Naive thymus-derived CD4-positive, alpha-beta T cell (primary cell): ENCODE measurements at regions of chr1 and their contacts with region 1.

Region 1: GRCh38 chr1:66271216-66271903 is 262.6 kb upstream of the SGIP1 start:
- DNase-seq: peak in 7 of 9 donors; percentile 43 to 72 (median 64)
- ATAC-seq: peak; percentile 64
- H3K4me3 ChIP-seq: no peak overlapping the region
- H3K4me3 Mint-ChIP-seq: peak overlapping the region in 9 of 10 donors; percentile 22 to 69 (median 33)
- H3K27ac ChIP-seq: peak overlapping the region; percentile 59
- H3K27ac Mint-ChIP-seq: peak overlapping the region; percentile 60 to 92 (median 87)
- H3K4me1 ChIP-seq: peaks cover 30 to 43% of the 10 kb centered on the region in 2 donors
- H3K4me1 Mint-ChIP-seq: peaks cover 36 to 69% (median 54%) of the 10 kb centered on the region in 7 donors
- H3K27me3 ChIP-seq: no peaks in the 10 kb centered on the region
- H3K27me3 Mint-ChIP-seq: no peaks in the 10 kb centered on the region

Region 2: DNA sequence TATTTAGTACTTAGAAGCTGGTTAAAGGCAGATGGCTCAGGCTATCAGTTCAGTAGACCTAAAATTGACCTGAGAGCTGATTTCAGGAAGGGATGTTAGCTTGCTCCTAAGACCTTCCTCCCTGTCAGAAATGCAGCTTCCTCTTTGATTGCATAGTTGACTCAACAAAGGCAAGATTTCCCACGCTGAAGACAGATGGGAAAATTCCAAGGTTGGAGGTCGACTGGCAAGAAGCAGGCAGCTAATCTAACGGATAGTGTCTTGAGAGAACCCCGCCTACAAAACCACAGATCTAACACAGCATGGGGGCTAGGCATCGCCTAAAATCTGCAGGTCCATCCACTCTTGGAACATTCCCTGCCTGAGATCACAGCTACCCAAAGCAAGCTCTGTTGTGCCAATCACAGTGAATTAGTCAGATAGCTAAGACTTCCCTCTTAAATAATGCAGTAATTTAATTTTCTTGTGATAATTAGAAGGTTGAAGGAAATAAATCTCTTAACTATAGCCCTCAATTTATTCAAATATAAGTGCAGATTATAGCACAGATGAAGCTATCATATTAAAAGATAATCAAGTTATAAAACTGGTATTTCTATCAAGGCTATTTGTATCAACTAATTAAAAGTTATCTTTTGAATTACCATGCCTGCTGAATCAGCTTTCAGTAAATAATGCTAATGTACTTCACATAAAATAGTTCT is 95.2 kb before region 1 on chr1:
- CTCF ChIA-PET with region 1: no interaction called
- POLR2A ChIA-PET with region 1: no interaction called
- intact Hi-C with region 1: no loop called
- DNase-seq: no peak
- ATAC-seq: no peak
- H3K4me3 ChIP-seq: no peak overlapping the region
- H3K4me3 Mint-ChIP-seq: no peak overlapping the region
- H3K27ac ChIP-seq: no peak overlapping the region
- H3K27ac Mint-ChIP-seq: no peak overlapping the region
- H3K4me1 ChIP-seq: no peaks in the 10 kb centered on the region
- H3K4me1 Mint-ChIP-seq: peaks cover 0 to 15% (median 0%) of the 10 kb centered on the region in 7 donors
- H3K27me3 ChIP-seq: no peaks in the 10 kb centered on the region
- H3K27me3 Mint-ChIP-seq: peaks cover 0 to 9% (median 0%) of the 10 kb centered on the region in 5 donors

Region 3: DNA sequence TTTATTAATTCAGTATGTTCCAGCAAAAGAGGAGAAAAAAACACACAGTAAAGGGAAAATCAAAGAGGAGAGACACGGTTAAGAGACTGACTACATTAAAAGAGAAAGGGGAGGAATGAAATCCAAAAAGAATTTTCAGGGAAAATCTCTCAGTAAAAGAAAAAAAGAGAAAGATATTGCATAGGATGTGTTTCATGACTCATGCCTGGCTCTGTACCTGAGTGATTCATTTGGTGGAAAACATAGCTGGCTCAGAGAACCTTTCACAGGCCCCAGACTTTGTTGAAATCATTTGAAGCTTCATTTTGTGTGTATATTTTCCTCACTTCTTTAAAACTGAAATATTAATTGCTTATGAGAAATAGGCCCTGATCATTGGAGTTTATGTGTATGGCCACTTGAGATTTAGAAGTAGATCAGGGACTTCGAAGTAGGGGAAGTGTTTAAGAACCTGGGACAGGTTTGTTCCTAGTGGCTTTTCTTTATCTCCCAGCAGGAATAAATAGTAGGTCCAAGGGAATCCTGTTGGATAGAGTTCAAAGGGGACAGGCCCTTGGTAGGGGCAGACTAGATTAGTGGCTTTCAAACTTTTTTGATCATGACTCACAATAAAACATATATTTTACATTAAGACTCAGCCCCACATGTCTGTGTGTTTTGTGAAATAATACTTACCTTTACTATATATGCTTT is 23.5 kb after region 1 on chr1:
- CTCF ChIA-PET with region 1: no interaction called
- POLR2A ChIA-PET with region 1: interaction called, 3 read pairs
- intact Hi-C with region 1: loop called in 1 of 2 experiments (anchors 1 kb)
- DNase-seq: no peak
- ATAC-seq: no peak
- H3K4me3 ChIP-seq: no peak overlapping the region
- H3K4me3 Mint-ChIP-seq: no peak overlapping the region
- H3K27ac ChIP-seq: no peak overlapping the region
- H3K27ac Mint-ChIP-seq: peak overlapping the region in 1 of 9 donors; percentile 73
- H3K4me1 ChIP-seq: no peaks in the 10 kb centered on the region
- H3K4me1 Mint-ChIP-seq: peaks cover 4 to 34% (median 17%) of the 10 kb centered on the region in 7 donors
- H3K27me3 ChIP-seq: no peaks in the 10 kb centered on the region
- H3K27me3 Mint-ChIP-seq: peaks cover 0 to 3% (median 0%) of the 10 kb centered on the region in 5 donors

Region 4: GRCh38 chr1:66924756-66925557 is 653.6 kb after region 1 on chr1 and contains the starts of genes DNAI4 and MIER1:
- CTCF ChIA-PET with region 1: no interaction called
- POLR2A ChIA-PET with region 1: no interaction called
- intact Hi-C with region 1: loop called in 1 of 2 experiments (anchors 5 kb)
- DNase-seq: peak; percentile 91 to 98 (median 96)
- ATAC-seq: peak; percentile 97
- H3K4me3 ChIP-seq: peak within 1 kb of the TSS; percentile 83
- H3K4me3 Mint-ChIP-seq: peak within 1 kb of the TSS; percentile 92 to 98 (median 96)
- H3K27ac ChIP-seq: peak within 1 kb of the TSS; percentile 95
- H3K27ac Mint-ChIP-seq: peak within 1 kb of the TSS; percentile 95 to 97 (median 97)
- H3K4me1 ChIP-seq: peaks cover 24 to 37% of the 10 kb centered on the region in 2 donors
- H3K4me1 Mint-ChIP-seq: peaks cover 18 to 75% (median 60%) of the 10 kb centered on the region in 7 donors
- H3K27me3 ChIP-seq: no peaks in the 10 kb centered on the region
- H3K27me3 Mint-ChIP-seq: no peaks in the 10 kb centered on the region
- total RNA-seq, gene DNAI4: 1.3 to 10.7 (median 9.7) TPM
- total RNA-seq, gene MIER1: 51.5 to 73.6 (median 70.9) TPM

Region 5: DNA sequence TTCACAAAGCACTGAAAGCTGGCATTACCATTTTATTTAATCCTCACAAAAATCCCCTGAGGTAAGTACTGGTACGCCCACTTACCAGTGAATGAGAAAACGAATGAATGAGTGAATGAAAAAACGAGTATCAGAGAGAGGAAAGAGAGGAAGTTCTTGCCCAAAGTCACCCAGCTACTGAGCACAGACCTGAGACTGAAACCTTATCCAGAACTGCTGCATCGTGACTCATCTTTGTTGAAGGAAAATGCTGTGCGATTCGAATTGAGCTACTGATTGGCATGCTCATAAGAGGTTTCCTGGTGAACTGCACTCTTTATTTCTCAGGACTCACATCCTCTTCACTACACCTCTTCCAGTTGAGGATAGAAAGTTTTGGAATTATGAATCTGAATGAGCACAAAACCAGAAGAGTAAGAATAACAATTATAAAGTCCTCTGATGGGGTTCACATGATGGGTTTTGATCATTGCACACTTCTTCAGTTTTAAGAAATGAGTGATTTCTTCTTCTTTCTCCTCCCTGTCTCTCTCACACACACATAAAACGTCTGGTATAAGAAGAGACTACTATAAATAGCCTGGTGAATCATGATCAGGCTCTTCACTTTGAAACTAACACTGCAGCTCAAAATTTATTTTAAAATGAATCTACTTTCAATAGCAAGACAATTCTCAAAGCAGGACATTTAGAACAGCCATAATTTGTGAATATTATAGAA is 1068.4 kb after region 1 on chr1:
- CTCF ChIA-PET with region 1: no interaction called
- POLR2A ChIA-PET with region 1: no interaction called
- intact Hi-C with region 1: loop called in 1 of 2 experiments (anchors 5 kb)
- DNase-seq: peak in 1 of 9 donors; percentile 41
- ATAC-seq: no peak
- H3K4me3 ChIP-seq: no peak overlapping the region
- H3K4me3 Mint-ChIP-seq: peak overlapping the region in 3 of 10 donors; percentile 1 to 61 (median 35)
- H3K27ac ChIP-seq: no peak overlapping the region
- H3K27ac Mint-ChIP-seq: peak overlapping the region in 1 of 9 donors; percentile 81
- H3K4me1 ChIP-seq: peaks cover 11 to 24% of the 10 kb centered on the region in 2 donors
- H3K4me1 Mint-ChIP-seq: peaks cover 30 to 81% (median 62%) of the 10 kb centered on the region in 7 donors
- H3K27me3 ChIP-seq: no peaks in the 10 kb centered on the region
- H3K27me3 Mint-ChIP-seq: no peaks in the 10 kb centered on the region